CD8-positive, alpha-beta memory T cell (primary cell): ENCODE measurements at regions of chr1 and their contacts with region 1.

Region 1: DNA sequence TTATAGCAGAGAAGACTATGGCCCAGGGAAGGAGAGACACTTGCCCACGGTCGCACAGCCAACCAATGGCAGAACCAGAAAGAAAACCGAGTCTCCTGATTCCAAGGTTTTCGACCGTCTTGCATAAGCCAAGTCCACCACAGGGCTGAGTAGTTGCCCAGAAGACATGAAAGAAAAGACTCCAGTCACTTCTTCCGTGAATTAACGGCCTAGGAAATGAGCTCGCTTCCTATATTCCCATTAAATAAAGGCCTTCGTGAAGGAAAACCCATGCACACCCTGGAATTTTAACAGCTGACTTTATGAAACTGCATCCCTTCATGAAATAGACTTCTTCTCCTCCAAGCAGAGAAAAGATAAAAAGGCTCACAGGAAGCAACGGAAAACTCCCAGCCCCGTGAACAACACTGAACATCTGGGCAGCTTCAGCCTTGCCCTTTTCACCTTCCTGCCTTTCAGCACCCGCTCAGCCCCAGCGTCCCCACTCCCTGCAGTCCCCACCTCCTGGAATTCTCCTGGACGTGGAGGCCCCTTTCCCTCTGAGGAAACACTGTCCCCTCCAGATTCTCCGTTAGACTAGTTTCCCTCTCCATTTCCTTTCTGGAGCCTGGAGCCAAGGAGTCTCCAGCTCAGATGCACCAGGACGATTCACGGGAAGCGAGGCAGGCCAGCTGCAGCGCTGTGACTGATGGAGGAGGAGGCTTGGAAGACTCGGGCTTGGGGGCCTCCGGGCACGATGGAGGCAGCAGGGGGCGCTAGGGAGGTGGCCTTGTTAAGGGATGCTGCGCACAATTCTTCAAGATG is 2.7 kb upstream of the MYOC start:
- DNase-seq: peak; percentile 26 to 70 (median 45)
- H3K4me3 ChIP-seq: no peak overlapping the region
- H3K4me3 Mint-ChIP-seq: peak overlapping the region in 6 of 7 donors; percentile 26 to 71 (median 54)
- H3K27ac ChIP-seq: no peak overlapping the region
- H3K27ac Mint-ChIP-seq: no peak overlapping the region
- H3K4me1 ChIP-seq: peaks cover 6% of the 10 kb centered on the region
- H3K4me1 Mint-ChIP-seq: peaks cover 7 to 10% (median 10%) of the 10 kb centered on the region in 3 donors
- H3K27me3 ChIP-seq: peaks cover 10% of the 10 kb centered on the region
- H3K27me3 Mint-ChIP-seq: peaks cover 16 to 60% of the 10 kb centered on the region in 2 donors

Region 2: DNA sequence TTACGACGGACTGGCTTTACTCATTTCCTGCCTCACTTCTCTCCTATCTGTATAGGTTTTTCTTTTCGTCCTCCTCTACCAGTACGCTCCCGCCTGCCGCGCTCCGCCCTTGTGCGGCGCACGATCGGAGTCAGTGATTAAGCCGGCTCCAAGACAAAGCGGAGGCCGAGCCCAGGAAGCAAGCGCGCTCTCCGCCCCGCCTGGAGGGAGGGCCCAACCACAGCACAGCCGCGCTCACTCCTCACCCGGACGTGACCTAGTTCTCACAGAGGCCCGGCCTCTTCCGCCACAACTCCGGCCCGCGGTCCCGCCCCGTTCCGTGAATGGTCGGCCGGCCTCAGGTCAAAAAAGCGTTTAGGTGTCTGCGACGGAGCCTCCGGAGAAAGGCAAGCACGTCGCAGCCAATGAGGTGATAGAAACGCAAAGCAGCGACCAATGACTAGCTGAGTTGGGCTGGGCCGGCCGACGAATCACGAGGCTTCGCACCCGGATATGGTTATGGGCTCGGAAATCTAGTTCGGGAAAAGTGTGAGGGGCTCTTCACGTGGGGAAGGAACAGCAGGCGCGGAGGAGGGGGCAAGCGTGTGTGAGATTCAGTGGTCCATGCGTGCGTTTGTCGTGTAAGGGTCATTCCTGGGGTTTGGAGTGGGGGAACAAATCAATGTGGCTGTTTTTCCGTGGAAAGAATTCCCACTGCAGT is 126.2 kb after region 1 on chr1 and contains the start of gene METTL13:
- CTCF ChIA-PET with region 1: no interaction called
- POLR2A ChIA-PET with region 1: interaction called, 12 read pairs
- DNase-seq: peak; percentile 96 to 99 (median 99)
- H3K4me3 ChIP-seq: peak within 1 kb of the TSS; percentile 79
- H3K4me3 Mint-ChIP-seq: peak within 1 kb of the TSS; percentile 89 to 99 (median 95)
- H3K27ac ChIP-seq: peak within 1 kb of the TSS; percentile 72
- H3K27ac Mint-ChIP-seq: peak within 1 kb of the TSS; percentile 72 to 99 (median 96)
- H3K4me1 ChIP-seq: peaks cover 52% of the 10 kb centered on the region
- H3K4me1 Mint-ChIP-seq: peaks cover 39 to 62% (median 59%) of the 10 kb centered on the region in 3 donors
- H3K27me3 ChIP-seq: no peaks in the 10 kb centered on the region
- H3K27me3 Mint-ChIP-seq: peaks cover 0 to 6% of the 10 kb centered on the region in 2 donors
- total RNA-seq, gene METTL13: 63.7 to 65.8 TPM